Right ventricle myocardium inferior (tissue), 1 donor: ENCODE measurements at regions of chr5 and their contacts with region 1.

Region 1: GRCh38 chr5:2038321-2039179 is 155.8 kb upstream of the IRX4 start:
- DNase-seq: peak; percentile 79
- ATAC-seq: peak; percentile 97

Region 2: GRCh38 chr5:1763548-1763911 is 275.0 kb before region 1 on chr5:
- intact Hi-C with region 1: loop called (anchors 5 kb)
- DNase-seq: no peak
- ATAC-seq: peak; percentile 61

Region 3: GRCh38 chr5:1975898-1976765 is 62.4 kb before region 1 on chr5:
- intact Hi-C with region 1: loop called (anchors 5 kb)
- DNase-seq: no peak
- ATAC-seq: no peak